Mammary epithelial cell (primary cell): ENCODE measurements at regions of chr22 and their contacts with region 1.

Region 1: GRCh38 chr22:20885557-20886323 is 26.9 kb downstream of the SNAP29 start:
- DNase-seq: peak; percentile 75
- H3K4me3 ChIP-seq: peak overlapping the region in 1 of 3 experiments; percentile 22
- H3K27ac ChIP-seq: peak overlapping the region; percentile 42
- H3K4me1 ChIP-seq: peaks cover 15% of the 10 kb centered on the region
- H3K27me3 ChIP-seq: no peaks in the 10 kb centered on the region
- CTCF ChIP-seq: peak; percentile 97 to 99

Region 2: DNA sequence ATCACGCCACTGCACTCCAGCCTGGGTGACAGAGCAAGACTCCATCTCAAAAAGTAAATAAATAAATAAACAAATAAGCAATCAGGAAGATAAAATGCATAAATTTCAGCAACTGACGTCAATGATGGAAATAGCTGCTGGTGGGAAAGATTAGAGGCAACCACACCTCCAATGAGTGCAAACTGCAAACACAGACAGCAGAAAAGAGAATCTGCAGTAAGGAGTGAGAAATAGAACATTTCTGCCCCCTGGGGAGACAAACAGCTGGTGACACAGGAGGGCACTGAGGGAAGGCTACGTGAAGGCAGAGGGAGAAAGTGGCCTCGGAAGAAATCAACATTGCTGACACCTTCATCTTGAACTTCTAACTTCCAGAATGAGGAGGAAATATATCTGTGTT is 33.7 kb before region 1 on chr22:
- CTCF ChIA-PET with region 1: no interaction called
- dilution Hi-C with region 1: loop called (anchors 5 kb)
- in situ Hi-C with region 1: no loop called
- intact Hi-C with region 1: no loop called
- DNase-seq: no peak
- H3K4me3 ChIP-seq: no peak overlapping the region
- H3K27ac ChIP-seq: no peak overlapping the region
- H3K4me1 ChIP-seq: peaks cover 3% of the 10 kb centered on the region
- H3K27me3 ChIP-seq: no peaks in the 10 kb centered on the region
- CTCF ChIP-seq: no peak

Region 3: DNA sequence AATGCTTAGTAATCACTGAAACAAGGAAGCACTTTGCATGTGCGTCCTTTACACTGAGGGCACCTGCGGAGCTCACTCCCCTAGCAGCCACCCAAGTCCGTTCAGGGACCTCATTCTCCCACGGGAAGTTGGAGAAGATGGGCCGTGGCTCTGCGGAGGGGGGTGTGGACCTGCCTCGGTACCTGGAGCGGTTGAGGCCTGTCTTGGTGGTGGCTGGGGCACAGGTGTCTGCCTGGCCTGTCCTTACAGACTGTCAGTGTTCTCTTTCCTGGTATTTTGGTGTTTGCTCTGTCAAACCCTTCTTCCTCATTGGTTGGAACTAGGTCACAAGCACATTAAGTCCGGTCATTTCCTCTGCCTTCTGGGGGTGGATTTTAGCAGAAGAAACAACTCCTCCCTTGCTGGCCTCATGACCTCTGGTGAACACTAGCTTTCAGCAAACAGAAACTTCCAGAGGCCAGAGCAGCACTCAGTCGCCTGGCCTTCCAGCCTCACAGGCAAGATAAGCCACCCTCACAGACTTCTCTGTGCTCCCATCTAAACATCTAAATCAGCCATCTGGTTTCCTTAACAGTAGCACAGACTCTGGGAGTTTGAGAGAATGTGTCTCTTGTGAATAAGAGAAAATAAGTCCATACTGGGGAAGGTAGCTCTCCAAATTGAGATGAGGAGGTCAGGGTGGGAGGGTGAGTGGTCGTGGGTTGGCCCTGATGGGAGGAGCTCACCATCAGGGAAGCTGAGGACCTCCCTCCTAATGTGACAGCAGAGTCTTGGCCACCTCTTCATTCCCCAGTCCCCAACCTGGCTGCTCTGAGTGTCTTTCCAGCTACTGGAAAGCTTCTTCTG is 18.3 kb before region 1 on chr22:
- CTCF ChIA-PET with region 1: no interaction called
- dilution Hi-C with region 1: no loop called
- in situ Hi-C with region 1: no loop called
- intact Hi-C with region 1: no loop called
- DNase-seq: no peak
- H3K4me3 ChIP-seq: no peak overlapping the region
- H3K27ac ChIP-seq: no peak overlapping the region
- H3K4me1 ChIP-seq: peaks cover 4% of the 10 kb centered on the region
- H3K27me3 ChIP-seq: no peaks in the 10 kb centered on the region
- CTCF ChIP-seq: no peak

Region 4: GRCh38 chr22:20957316-20958101 is 71.8 kb after region 1 on chr22:
- CTCF ChIA-PET with region 1: interaction called, 3 read pairs
- dilution Hi-C with region 1: no loop called
- in situ Hi-C with region 1: no loop called
- intact Hi-C with region 1: loop called (anchors 1 kb)
- DNase-seq: no peak
- H3K4me3 ChIP-seq: peak overlapping the region; percentile 16 to 55 (median 41)
- H3K27ac ChIP-seq: no peak overlapping the region
- H3K4me1 ChIP-seq: peaks cover 45% of the 10 kb centered on the region
- H3K27me3 ChIP-seq: no peaks in the 10 kb centered on the region
- CTCF ChIP-seq: no peak

Region 5: DNA sequence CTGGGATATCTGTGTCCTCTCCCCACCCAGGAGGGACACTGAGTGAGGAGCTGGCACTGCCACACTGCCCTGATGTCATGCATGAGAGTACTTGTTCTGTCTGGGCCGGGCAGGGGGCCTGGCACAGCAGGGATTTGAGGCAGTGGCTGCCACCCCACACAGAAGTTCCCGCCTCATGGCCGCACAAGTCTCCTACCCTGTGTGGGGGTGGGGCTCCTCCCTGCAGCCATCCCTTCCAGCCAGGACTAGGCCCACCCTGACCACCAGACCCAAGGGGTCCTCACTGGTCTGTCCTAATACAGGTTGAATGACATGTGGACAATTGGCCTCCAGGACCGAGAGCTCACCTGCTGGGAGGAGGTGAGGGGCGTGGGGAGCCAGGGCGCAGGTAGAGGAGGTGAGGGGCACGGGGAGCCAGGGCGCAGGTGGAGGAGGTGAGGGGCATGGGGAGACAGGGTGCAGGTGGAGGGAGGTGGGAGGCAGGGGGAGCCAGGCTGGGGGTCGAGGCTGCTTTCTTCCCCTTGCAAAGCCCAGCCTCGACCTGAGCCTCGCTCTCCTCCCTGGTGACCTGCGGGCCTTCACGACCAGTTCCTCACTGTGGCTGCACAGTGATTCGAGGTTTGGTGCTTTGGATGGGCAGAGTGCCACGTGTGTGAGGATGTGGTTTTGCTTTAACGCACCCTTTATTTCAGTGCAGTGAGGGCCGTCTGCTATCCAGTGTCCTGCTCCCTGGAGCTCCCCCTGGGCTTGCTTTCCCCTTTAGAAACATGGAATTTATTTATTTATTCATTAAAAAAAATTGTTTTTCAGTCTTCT is 103.8 kb after region 1 on chr22:
- CTCF ChIA-PET with region 1: no interaction called
- dilution Hi-C with region 1: loop called (anchors 5 kb)
- in situ Hi-C with region 1: no loop called
- intact Hi-C with region 1: no loop called
- DNase-seq: no peak
- H3K4me3 ChIP-seq: no peak overlapping the region
- H3K27ac ChIP-seq: no peak overlapping the region
- H3K4me1 ChIP-seq: no peaks in the 10 kb centered on the region
- H3K27me3 ChIP-seq: no peaks in the 10 kb centered on the region
- CTCF ChIP-seq: no peak